Caco-2 (cell line): ENCODE measurements at regions of chr5 and their contacts with region 1.

Region 1: GRCh38 chr5:124908581-124909451 is 162.4 kb upstream of the ZNF608 start:
- DNase-seq: peak; percentile 52 to 67
- H3K4me3 ChIP-seq: no peak overlapping the region
- H3K4me3 Mint-ChIP-seq: peak overlapping the region; percentile 40
- H3K27ac Mint-ChIP-seq: peak overlapping the region; percentile 60
- H3K4me1 ChIP-seq: peaks cover 49% of the 10 kb centered on the region
- H3K4me1 Mint-ChIP-seq: peaks cover 31% of the 10 kb centered on the region
- H3K27me3 ChIP-seq: no peaks in the 10 kb centered on the region
- H3K27me3 Mint-ChIP-seq: no peaks in the 10 kb centered on the region
- CTCF ChIP-seq: no peak

Region 2: DNA sequence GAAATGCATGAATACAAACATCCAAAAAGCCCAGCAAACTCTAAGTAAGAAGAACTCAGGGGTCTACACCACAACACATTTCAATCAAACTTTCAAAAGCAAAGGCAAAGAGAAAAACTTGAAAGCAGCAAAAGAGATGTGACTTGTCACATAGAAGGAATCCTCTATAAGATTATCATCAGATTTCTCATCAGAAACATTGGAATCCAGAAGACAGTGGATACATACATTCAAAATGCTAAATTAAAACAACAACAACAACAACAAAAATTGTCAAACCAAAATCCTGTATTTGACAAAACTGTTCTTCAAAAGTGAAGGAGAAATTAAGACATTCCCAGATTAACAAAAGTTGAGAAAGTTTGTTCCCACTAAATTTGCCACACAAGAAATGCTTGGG is 525.1 kb before region 1 on chr5:
- CTCF ChIA-PET with region 1: no interaction called
- POLR2A ChIA-PET with region 1: no interaction called
- intact Hi-C with region 1: no loop called
- DNase-seq: no peak
- H3K4me3 ChIP-seq: no peak overlapping the region
- H3K4me3 Mint-ChIP-seq: no peak overlapping the region
- H3K27ac Mint-ChIP-seq: no peak overlapping the region
- H3K4me1 ChIP-seq: no peaks in the 10 kb centered on the region
- H3K4me1 Mint-ChIP-seq: no peaks in the 10 kb centered on the region
- H3K27me3 ChIP-seq: no peaks in the 10 kb centered on the region
- H3K27me3 Mint-ChIP-seq: no peaks in the 10 kb centered on the region
- CTCF ChIP-seq: no peak

Region 3: GRCh38 chr5:124524552-124525232 is 384.1 kb before region 1 on chr5:
- CTCF ChIA-PET with region 1: no interaction called
- POLR2A ChIA-PET with region 1: no interaction called
- intact Hi-C with region 1: loop called (anchors 2 kb)
- DNase-seq: no peak
- H3K4me3 ChIP-seq: no peak overlapping the region
- H3K4me3 Mint-ChIP-seq: no peak overlapping the region
- H3K27ac Mint-ChIP-seq: peak overlapping the region; percentile 14
- H3K4me1 ChIP-seq: peaks cover 26% of the 10 kb centered on the region
- H3K4me1 Mint-ChIP-seq: peaks cover 25% of the 10 kb centered on the region
- H3K27me3 ChIP-seq: no peaks in the 10 kb centered on the region
- H3K27me3 Mint-ChIP-seq: no peaks in the 10 kb centered on the region
- CTCF ChIP-seq: no peak

Region 4: DNA sequence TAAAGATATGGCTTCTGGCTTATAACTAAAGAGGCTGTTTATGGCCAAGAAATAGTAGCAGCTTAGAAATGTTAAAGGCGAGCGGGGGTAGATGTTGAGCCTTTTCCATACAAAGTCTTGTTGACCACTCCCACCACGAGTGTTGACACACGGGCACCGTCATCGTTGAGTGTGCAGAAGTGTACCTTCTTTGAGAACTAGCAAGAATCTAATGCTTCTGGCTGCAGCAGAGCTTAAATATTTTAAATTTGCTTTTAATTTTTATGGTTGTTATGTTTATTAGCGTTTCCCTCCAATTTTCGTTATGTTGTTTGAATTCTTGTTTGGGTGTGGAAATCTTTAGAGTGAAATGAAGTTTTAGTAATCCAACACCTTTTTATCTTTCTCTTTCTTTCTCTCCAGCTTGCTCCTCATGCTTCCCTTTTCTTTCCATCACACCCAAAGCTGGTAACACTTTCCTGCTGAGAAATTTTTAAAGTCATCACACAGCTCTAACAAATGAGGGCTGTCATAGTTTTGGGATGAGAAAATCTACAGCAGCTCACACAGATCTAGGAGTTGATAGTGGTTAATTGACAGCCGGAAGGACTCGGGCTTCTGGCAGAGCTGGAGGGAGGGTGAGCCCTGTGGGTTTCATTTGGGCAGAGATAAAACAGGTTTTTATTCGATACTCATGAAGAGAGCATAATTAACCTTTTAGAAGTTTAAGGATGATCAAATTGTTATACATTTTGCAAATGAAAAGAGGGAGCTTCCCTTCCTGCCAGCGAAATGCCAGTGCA is 42.3 kb before region 1 on chr5:
- CTCF ChIA-PET with region 1: no interaction called
- POLR2A ChIA-PET with region 1: no interaction called
- intact Hi-C with region 1: no loop called
- DNase-seq: no peak
- H3K4me3 ChIP-seq: no peak overlapping the region
- H3K4me3 Mint-ChIP-seq: no peak overlapping the region
- H3K27ac Mint-ChIP-seq: no peak overlapping the region
- H3K4me1 ChIP-seq: no peaks in the 10 kb centered on the region
- H3K4me1 Mint-ChIP-seq: peaks cover 11% of the 10 kb centered on the region
- H3K27me3 ChIP-seq: no peaks in the 10 kb centered on the region
- H3K27me3 Mint-ChIP-seq: no peaks in the 10 kb centered on the region
- CTCF ChIP-seq: no peak

Region 5: DNA sequence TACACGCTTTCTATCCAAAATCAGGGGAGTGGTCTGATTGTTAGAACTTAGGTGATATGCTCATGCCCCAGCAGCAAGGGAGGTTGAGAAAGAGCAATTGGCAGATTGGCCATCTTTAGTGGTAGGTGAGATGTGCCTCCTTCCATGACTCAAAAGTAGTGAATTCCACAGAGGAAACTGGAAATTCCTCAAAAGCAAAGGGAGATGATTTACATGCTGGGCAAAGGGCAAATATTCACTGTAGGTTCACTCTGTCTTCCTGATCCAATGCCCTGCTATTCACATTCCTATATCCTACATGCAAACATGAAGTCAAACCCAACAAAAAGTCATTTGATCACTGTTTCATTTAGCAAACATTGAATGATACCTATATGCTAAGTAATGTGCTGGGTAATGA is 32.2 kb before region 1 on chr5:
- CTCF ChIA-PET with region 1: no interaction called
- POLR2A ChIA-PET with region 1: no interaction called
- intact Hi-C with region 1: loop called (anchors 1 kb)
- DNase-seq: peak in 1 of 2 experiments; percentile 46
- H3K4me3 ChIP-seq: no peak overlapping the region
- H3K4me3 Mint-ChIP-seq: no peak overlapping the region
- H3K27ac Mint-ChIP-seq: no peak overlapping the region
- H3K4me1 ChIP-seq: peaks cover 19% of the 10 kb centered on the region
- H3K4me1 Mint-ChIP-seq: peaks cover 23% of the 10 kb centered on the region
- H3K27me3 ChIP-seq: no peaks in the 10 kb centered on the region
- H3K27me3 Mint-ChIP-seq: no peaks in the 10 kb centered on the region
- CTCF ChIP-seq: no peak

Region 6: GRCh38 chr5:124924729-124925128 is 15.9 kb after region 1 on chr5:
- CTCF ChIA-PET with region 1: no interaction called
- POLR2A ChIA-PET with region 1: no interaction called
- intact Hi-C with region 1: loop called (anchors 1 kb)
- DNase-seq: no peak
- H3K4me3 ChIP-seq: no peak overlapping the region
- H3K4me3 Mint-ChIP-seq: peak overlapping the region; percentile 12
- H3K27ac Mint-ChIP-seq: peak overlapping the region; percentile 57
- H3K4me1 ChIP-seq: peaks cover 50% of the 10 kb centered on the region
- H3K4me1 Mint-ChIP-seq: peaks cover 23% of the 10 kb centered on the region
- H3K27me3 ChIP-seq: no peaks in the 10 kb centered on the region
- H3K27me3 Mint-ChIP-seq: no peaks in the 10 kb centered on the region
- CTCF ChIP-seq: no peak

Region 7: GRCh38 chr5:124952079-124952478 is 43.3 kb after region 1 on chr5:
- CTCF ChIA-PET with region 1: no interaction called
- POLR2A ChIA-PET with region 1: no interaction called
- intact Hi-C with region 1: no loop called
- DNase-seq: no peak
- H3K4me3 ChIP-seq: no peak overlapping the region
- H3K4me3 Mint-ChIP-seq: no peak overlapping the region
- H3K27ac Mint-ChIP-seq: no peak overlapping the region
- H3K4me1 ChIP-seq: no peaks in the 10 kb centered on the region
- H3K4me1 Mint-ChIP-seq: no peaks in the 10 kb centered on the region
- H3K27me3 ChIP-seq: no peaks in the 10 kb centered on the region
- H3K27me3 Mint-ChIP-seq: no peaks in the 10 kb centered on the region
- CTCF ChIP-seq: no peak

Region 8: GRCh38 chr5:125011014-125011413 is 102.2 kb after region 1 on chr5:
- CTCF ChIA-PET with region 1: no interaction called
- POLR2A ChIA-PET with region 1: no interaction called
- intact Hi-C with region 1: loop called (anchors 2 kb)
- DNase-seq: no peak
- H3K4me3 ChIP-seq: no peak overlapping the region
- H3K4me3 Mint-ChIP-seq: peak overlapping the region; percentile 36
- H3K27ac Mint-ChIP-seq: peak overlapping the region; percentile 83
- H3K4me1 ChIP-seq: peaks cover 60% of the 10 kb centered on the region
- H3K4me1 Mint-ChIP-seq: peaks cover 20% of the 10 kb centered on the region
- H3K27me3 ChIP-seq: no peaks in the 10 kb centered on the region
- H3K27me3 Mint-ChIP-seq: no peaks in the 10 kb centered on the region
- CTCF ChIP-seq: peak in 1 of 2 experiments; percentile 4

Region 9: DNA sequence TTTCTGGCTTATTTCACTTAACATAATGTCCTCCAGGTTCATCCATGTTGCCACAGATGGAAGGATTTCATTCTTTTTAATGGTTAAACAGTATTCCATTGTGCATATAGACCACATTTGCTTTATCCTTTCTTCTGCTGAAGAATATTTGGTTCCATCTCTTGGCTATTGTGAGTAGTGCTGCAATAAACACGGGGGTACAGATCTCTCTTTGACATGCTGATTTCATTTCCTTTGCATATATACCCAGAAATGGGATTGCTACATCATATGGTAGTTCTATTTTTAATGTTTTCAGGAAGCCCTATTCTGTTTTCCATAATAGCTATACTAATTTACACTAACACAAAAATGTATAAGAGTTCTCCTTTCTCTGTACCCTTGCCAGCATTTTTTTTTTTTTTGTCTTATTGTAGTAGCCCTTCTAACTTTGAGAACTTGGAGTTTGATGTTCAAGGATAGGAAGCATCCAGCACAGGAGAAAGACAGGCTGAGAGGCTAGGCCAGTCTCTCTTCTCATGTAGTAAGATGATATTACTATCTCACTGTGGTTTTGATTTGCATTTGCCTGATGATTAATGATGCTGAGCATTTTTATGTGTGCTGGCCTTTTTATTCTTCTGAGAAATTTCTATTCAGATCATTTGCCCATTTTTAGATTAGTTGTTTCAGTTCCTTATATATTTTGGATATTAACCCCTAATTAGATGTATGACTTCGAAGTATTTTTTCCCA is 429.8 kb after region 1 on chr5:
- CTCF ChIA-PET with region 1: no interaction called
- POLR2A ChIA-PET with region 1: no interaction called
- intact Hi-C with region 1: loop called (anchors 1 kb)
- DNase-seq: no peak
- H3K4me3 ChIP-seq: no peak overlapping the region
- H3K4me3 Mint-ChIP-seq: no peak overlapping the region
- H3K27ac Mint-ChIP-seq: no peak overlapping the region
- H3K4me1 ChIP-seq: no peaks in the 10 kb centered on the region
- H3K4me1 Mint-ChIP-seq: no peaks in the 10 kb centered on the region
- H3K27me3 ChIP-seq: no peaks in the 10 kb centered on the region
- H3K27me3 Mint-ChIP-seq: no peaks in the 10 kb centered on the region
- CTCF ChIP-seq: peak in 1 of 2 experiments; percentile 18

Region 10: DNA sequence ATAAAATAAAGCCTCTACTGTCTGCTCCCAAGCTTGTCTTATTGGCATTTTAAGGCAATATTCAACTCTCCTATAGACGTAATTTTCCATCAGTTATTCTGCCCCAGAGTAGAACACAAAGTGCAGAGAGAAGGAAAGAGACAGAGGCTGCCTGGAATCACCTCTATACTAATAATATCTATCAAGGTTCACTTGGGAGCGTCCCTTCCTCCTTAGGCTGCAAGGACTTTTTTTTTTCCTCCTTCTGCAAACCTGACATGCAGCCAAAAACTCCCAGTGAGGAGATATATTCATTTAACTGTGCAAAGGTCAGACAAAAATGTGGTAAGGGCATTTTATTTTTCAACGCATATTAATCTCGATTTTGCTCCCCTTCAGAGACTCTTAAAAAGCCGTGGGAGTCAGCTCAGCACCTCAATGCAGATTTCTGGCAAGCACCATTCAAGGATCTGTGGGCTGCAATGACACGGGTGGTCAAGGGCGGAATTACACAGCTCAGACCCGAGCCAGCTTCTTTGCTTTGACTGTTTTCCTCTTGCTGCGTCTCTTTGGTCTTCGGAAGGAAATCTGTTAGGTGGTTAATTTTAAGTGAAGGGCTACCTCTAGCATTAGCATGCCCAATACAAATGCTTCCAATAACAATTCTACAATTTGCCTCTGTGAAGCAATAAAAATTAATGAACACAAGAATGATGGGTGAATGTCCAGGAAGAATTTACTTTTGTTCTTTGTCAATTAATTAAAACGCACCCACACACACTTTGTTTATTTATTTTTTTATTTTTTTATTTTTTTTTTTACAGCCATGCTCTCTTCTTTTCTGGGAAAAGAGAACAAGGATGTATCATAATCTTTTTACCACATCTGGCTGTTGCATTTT is 926.7 kb after region 1 on chr5:
- CTCF ChIA-PET with region 1: no interaction called
- POLR2A ChIA-PET with region 1: no interaction called
- intact Hi-C with region 1: loop called (anchors 2 kb)
- DNase-seq: peak; percentile 43 to 44
- H3K4me3 ChIP-seq: no peak overlapping the region
- H3K4me3 Mint-ChIP-seq: no peak overlapping the region
- H3K27ac Mint-ChIP-seq: no peak overlapping the region
- H3K4me1 ChIP-seq: no peaks in the 10 kb centered on the region
- H3K4me1 Mint-ChIP-seq: no peaks in the 10 kb centered on the region
- H3K27me3 ChIP-seq: no peaks in the 10 kb centered on the region
- H3K27me3 Mint-ChIP-seq: no peaks in the 10 kb centered on the region
- CTCF ChIP-seq: peak; percentile 69 to 71